ENCODE measurements at regions of chr4 and their contacts with region 1.

Region 1: DNA sequence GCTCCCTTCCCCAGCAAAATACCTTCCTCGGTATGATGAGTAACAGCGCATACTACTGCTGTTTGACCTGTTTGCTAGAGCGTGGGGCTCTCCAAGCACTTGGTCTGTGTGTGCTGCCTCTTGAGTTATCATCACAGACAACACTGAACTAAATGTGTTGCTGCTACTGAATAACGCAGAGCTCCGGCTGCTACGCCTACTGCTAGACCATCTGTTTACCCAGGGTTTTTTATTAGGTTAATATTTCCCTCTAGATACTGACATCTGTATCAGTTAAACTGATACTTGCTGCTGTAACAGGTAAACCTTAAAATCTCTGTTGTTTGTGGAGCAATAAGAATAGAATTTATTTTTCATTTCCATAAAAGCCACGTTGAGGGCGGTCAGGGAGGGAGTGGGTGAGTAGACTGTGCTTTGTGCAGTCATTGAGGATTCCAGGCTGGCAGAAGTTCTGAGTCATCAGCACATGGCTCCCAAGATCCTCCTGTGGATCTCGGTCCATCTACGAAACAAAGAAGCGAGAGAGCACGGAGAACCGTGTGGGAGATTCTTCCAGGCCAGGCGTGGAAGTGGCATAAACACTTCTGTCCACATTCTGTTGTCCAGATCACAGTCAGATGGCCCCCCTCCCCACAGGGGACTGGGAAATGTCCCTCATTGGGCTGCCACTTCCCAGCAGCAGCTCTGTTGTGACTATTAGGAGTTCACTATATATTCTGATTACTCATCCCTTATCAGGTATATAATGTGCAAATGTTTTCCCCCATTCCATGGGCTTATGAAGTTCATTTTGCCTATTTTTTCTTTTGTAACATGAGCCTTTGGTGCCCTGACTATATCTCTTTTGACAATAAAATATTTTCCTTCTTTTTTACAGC is 14.1 kb downstream of the GRK4 start:
- DNase-seq: no peak
- ATAC-seq: no peak
- H3K4me3 ChIP-seq: no peak overlapping the region
- H3K4me3 Mint-ChIP-seq: no peak overlapping the region
- H3K27ac ChIP-seq: no peak overlapping the region
- H3K27ac Mint-ChIP-seq: no peak overlapping the region
- H3K4me1 ChIP-seq: peaks cover 0 to 2% of the 10 kb centered on the region in 2 donors
- H3K4me1 Mint-ChIP-seq: peaks cover 1% of the 10 kb centered on the region
- H3K27me3 ChIP-seq: peaks cover 0 to 2% (median 0%) of the 10 kb centered on the region in 4 experiments
- H3K27me3 Mint-ChIP-seq: no peaks in the 10 kb centered on the region
- CTCF ChIP-seq: no peak

Region 2: DNA sequence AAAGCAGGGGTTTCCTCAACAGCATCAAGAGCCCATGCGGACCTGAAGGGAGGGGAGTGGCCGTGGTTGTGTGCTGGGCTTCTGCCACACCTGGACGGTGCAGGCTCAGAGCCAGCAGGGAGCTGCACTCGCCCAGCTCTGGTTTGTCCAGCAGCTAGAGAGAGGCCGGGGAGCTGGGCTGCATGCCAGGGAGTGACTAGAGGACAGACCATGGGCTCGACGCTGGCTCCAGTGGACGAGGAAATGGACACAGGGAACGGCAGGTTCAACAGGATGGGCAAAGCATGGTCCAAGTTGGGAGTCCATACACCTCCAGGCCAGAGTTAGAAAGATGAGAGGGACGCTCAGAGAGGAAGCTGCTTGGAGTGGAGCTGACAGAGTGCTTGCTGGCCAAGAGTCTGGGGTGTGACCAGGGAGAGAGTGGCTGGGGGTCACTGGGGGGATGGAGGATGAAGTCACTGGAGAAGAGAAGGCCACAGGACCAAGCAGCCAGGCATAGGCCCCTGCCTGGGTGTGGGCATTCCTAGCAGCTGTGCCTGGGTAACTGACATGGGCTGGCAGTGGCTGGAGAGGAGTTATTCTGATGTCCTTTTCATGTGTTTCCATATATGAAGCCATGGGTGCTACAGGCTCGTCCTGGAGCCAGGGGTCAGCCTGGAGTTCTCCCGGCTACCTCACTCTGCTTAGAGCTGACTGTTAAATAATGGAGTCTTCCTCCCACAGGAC is 54.1 kb after region 1 on chr4:
- CTCF ChIA-PET with region 1: interaction called, 38 read pairs
- POLR2A ChIA-PET with region 1: no interaction called
- intact Hi-C with region 1: no loop called
- DNase-seq: no peak
- ATAC-seq: no peak
- H3K4me3 ChIP-seq: no peak overlapping the region
- H3K4me3 Mint-ChIP-seq: no peak overlapping the region
- H3K27ac ChIP-seq: no peak overlapping the region
- H3K27ac Mint-ChIP-seq: no peak overlapping the region
- H3K4me1 ChIP-seq: no peaks in the 10 kb centered on the region
- H3K4me1 Mint-ChIP-seq: no peaks in the 10 kb centered on the region
- H3K27me3 ChIP-seq: no peaks in the 10 kb centered on the region
- H3K27me3 Mint-ChIP-seq: no peaks in the 10 kb centered on the region
- CTCF ChIP-seq: no peak

Region 3: DNA sequence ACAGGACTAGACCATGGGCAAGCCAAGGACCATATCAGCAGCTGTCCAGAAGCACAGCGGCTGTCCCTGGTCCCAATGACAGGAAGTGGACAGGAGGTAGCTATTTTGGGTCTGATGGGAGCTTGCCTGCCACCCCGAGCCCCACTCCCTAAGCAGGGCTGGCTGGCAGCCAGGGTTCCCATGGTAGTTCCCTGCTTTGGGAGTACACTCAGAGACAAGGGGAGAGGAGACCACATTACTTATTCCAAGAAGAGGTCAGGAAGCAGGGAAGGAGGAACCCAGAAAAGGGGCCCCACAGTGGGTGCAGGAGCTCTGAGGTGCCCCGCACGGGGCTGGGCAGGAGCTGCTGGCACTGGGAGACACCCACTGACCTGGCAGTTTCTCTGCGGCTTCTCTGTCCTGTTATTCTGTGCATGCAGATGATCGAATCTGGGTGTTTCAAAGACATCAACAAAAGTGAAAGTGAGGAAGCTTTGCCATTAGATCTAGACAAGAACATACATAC is 60.6 kb after region 1 on chr4:
- CTCF ChIA-PET with region 1: interaction called, 38 read pairs
- POLR2A ChIA-PET with region 1: no interaction called
- intact Hi-C with region 1: loop called (anchors 1 kb)
- DNase-seq: peak; percentile 48
- ATAC-seq: no peak
- H3K4me3 ChIP-seq: peak overlapping the region in 4 of 5 experiments; percentile 14 to 60 (median 42)
- H3K4me3 Mint-ChIP-seq: peak overlapping the region; percentile 75
- H3K27ac ChIP-seq: peak overlapping the region in 1 of 2 donors; percentile 48
- H3K27ac Mint-ChIP-seq: peak overlapping the region; percentile 70
- H3K4me1 ChIP-seq: peaks cover 31 to 58% of the 10 kb centered on the region in 2 donors
- H3K4me1 Mint-ChIP-seq: peaks cover 48% of the 10 kb centered on the region
- H3K27me3 ChIP-seq: no peaks in the 10 kb centered on the region
- H3K27me3 Mint-ChIP-seq: no peaks in the 10 kb centered on the region
- CTCF ChIP-seq: no peak

Measured in B cell (primary cell).